Activated naive CD4-positive, alpha-beta T cell treated with anti-CD3 and anti-CD28 coated beads, Interleukin-2, amount 10 ng/mL, durations not matched to agents 7 days and 5 days (primary cell): ENCODE measurements at regions of chr14 and their contacts with region 1.

Region 1: GRCh38 chr14:64294672-64295413 is 672 bp upstream of the ESR2 start:
- DNase-seq: peak; percentile 91
- H3K4me3 Mint-ChIP-seq: peak overlapping the region; percentile 62
- H3K27ac Mint-ChIP-seq: peak overlapping the region; percentile 28
- H3K4me1 Mint-ChIP-seq: peaks cover 26% of the 10 kb centered on the region
- H3K27me3 Mint-ChIP-seq: peaks cover 41% of the 10 kb centered on the region

Region 2: DNA sequence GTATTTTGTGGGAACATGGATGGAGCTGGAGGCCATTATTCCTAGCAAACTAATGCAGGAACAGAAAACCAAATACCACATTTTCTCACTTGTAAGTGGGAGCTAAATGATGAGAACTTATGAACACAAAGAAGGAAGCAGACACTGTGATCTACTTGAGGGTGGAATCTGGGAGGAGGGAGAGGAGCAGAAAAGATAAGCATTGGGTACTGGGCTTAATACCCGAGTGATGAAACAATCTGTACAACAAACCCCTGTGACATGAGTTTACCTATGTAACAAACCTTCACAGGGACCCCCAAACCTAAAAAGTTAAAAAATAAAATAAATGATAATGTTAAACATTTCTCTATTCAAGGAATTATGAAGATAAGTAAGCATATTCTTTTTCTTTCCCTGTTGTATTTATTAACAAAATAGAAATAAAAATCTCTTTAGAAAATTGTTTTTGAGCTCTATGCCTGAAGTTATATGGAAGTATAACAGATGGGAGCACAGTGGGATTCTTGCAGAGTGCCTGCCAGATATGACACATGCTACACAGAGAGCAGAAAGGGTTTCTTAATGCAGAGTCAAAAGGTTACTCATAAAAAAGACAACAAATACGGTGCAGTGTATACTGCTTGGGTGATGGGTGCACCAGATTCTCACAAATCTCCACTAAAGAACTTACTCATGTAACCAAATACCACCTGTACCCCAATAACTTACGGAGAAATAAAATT is 494.0 kb before region 1 on chr14:
- CTCF ChIA-PET with region 1: interaction called, 29 read pairs
- DNase-seq: no peak
- H3K4me3 Mint-ChIP-seq: no peak overlapping the region
- H3K27ac Mint-ChIP-seq: no peak overlapping the region
- H3K4me1 Mint-ChIP-seq: peaks cover 6% of the 10 kb centered on the region
- H3K27me3 Mint-ChIP-seq: peaks cover 17% of the 10 kb centered on the region

Region 3: DNA sequence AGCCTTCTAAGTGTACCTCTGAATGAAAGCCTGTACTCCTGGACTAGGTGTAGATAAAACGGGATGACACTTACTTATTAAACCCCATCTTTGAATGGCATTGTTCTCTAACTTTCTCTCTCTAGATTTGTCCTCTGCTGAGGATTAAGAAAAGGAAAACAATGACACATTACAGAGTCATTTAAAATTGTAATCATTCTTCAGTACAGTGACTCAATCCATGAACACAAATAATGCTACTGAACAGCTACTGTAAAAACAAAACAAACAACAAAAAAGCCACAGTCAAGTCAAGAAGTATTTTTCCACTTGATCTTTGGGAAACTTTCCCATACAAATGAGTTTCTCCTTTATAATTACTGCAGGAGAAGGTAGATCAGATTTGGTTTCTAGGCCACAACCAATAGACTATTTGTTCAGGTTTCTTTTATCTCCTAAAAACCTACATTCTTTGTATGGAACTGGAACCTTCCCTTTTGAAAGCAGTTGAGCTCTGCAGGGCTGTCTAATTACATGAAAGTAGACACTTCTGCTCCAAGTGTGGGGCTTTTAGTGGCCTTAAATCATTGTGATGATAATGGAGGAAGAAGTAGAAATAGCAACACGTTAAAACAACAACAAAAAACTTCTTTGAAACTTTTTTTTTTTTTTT is 219.8 kb before region 1 on chr14:
- CTCF ChIA-PET with region 1: no interaction called
- DNase-seq: no peak
- H3K4me3 Mint-ChIP-seq: no peak overlapping the region
- H3K27ac Mint-ChIP-seq: peak overlapping the region; percentile 46
- H3K4me1 Mint-ChIP-seq: no peaks in the 10 kb centered on the region
- H3K27me3 Mint-ChIP-seq: no peaks in the 10 kb centered on the region

Region 4: DNA sequence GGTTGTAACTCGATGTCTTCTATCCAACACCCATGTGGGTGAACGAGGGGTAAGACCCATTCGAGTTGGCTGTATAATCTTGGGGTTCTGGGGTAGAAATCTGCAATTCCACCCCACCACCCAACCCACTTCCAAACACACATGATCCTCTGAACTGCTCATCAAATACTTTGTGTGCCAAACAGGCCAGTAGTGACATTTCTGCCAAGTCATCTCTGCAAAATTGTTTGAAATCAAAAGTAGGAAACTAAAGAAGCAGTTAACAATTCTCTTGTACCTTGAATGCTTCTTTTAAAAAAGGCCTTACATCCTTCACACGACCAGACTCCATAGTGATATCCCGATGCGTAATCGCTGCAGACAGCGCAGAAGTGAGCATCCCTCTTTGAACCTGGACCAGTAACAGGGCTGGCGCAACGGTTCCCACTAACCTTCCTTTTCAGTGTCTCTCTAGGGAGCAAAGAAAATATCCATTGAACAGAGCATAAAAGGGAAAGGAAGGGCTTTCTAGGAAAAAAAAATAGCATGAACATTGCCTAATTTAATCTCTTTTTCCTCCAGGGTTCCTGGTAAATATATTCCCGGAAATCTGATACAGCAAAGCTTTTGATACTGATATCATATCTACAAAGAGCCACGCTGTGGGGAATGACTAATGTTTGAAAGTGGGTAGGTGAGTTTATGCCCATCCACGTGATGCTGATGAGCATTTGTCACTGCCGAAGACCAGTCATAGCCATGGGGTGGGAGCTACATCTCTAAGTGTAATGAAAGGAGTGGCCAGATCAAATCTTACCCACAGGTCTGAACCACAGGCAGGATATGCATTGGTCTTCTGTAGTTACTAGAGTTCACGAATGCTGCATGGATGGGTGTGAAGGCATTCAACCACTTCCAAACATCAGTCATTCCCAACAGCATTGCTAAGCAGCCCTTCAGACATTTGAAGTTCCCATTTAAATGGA is 14.9 kb before region 1 on chr14:
- CTCF ChIA-PET with region 1: interaction called, 12 read pairs
- DNase-seq: no peak
- H3K4me3 Mint-ChIP-seq: no peak overlapping the region
- H3K27ac Mint-ChIP-seq: no peak overlapping the region
- H3K4me1 Mint-ChIP-seq: peaks cover 18% of the 10 kb centered on the region
- H3K27me3 Mint-ChIP-seq: no peaks in the 10 kb centered on the region

Region 5: DNA sequence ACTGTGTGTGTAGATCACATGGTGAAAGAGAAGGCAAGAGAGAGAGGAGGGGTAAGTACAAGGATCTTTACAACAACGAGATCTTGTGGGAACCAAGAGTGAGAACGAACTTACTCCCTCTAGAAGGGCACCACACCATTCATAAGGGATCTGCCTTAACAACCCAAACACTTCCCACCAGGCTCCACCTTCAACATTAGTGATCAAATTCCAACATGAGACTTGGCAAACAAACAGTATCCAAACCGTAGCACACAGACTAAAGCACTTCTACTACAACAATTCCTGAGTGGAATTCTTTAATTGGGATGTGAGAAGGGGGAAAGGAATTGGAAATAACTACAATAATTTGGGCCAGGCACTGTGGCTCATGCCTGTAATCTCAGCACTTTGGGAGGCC is 34.3 kb after region 1 on chr14:
- CTCF ChIA-PET with region 1: no interaction called
- DNase-seq: no peak
- H3K4me3 Mint-ChIP-seq: no peak overlapping the region
- H3K27ac Mint-ChIP-seq: no peak overlapping the region
- H3K4me1 Mint-ChIP-seq: no peaks in the 10 kb centered on the region
- H3K27me3 Mint-ChIP-seq: peaks cover 24% of the 10 kb centered on the region